PC-3 (cell line): ENCODE measurements at regions of chr18 and their contacts with region 1.

Region 1: GRCh38 chr18:70243131-70243530 is 37.6 kb upstream of the RTTN start:
- DNase-seq: peak; percentile 88
- ATAC-seq: peak; percentile 97
- H3K4me3 ChIP-seq: peak overlapping the region; percentile 59
- H3K27ac ChIP-seq: peak overlapping the region; percentile 95
- H3K4me1 ChIP-seq: peaks cover 16% of the 10 kb centered on the region
- H3K27me3 ChIP-seq: no peaks in the 10 kb centered on the region
- CTCF ChIP-seq: no peak

Region 2: GRCh38 chr18:70205421-70206397 is 37.4 kb before region 1 on chr18 and contains the start of gene RTTN:
- CTCF ChIA-PET with region 1: no interaction called
- POLR2A ChIA-PET with region 1: no interaction called
- intact Hi-C with region 1: loop called (anchors 1 kb)
- DNase-seq: peak; percentile 94
- ATAC-seq: peak; percentile 97
- H3K4me3 ChIP-seq: peak within 1 kb of the TSS; percentile 92
- H3K27ac ChIP-seq: peak within 1 kb of the TSS; percentile 95
- H3K4me1 ChIP-seq: peaks cover 8% of the 10 kb centered on the region; the same call in 1 of the 2 replicates
- H3K27me3 ChIP-seq: no peaks in the 10 kb centered on the region
- CTCF ChIP-seq: no peak
- total RNA-seq, gene RTTN: 22.4 and 24.7 TPM in 2 replicates